ENCODE measurements at regions of chr12 and their contacts with region 1.

Region 1: GRCh38 chr12:94560431-94561221 is 89.7 kb downstream of the TMCC3 start:
- DNase-seq: peak; percentile 93
- H3K4me3 Mint-ChIP-seq: peak overlapping the region; percentile 47
- H3K27ac Mint-ChIP-seq: peak overlapping the region; percentile 90
- H3K4me1 Mint-ChIP-seq: peaks cover 26% of the 10 kb centered on the region
- H3K27me3 Mint-ChIP-seq: no peaks in the 10 kb centered on the region
- CTCF ChIP-seq: no peak

Region 2: GRCh38 chr12:94080348-94081009 is 480.1 kb before region 1 on chr12:
- CTCF ChIA-PET with region 1: no interaction called
- POLR2A ChIA-PET with region 1: no interaction called
- intact Hi-C with region 1: no loop called
- DNase-seq: no peak
- H3K4me3 Mint-ChIP-seq: no peak overlapping the region
- H3K27ac Mint-ChIP-seq: no peak overlapping the region
- H3K4me1 Mint-ChIP-seq: peaks cover 9% of the 10 kb centered on the region
- H3K27me3 Mint-ChIP-seq: no peaks in the 10 kb centered on the region
- CTCF ChIP-seq: no peak

Region 3: DNA sequence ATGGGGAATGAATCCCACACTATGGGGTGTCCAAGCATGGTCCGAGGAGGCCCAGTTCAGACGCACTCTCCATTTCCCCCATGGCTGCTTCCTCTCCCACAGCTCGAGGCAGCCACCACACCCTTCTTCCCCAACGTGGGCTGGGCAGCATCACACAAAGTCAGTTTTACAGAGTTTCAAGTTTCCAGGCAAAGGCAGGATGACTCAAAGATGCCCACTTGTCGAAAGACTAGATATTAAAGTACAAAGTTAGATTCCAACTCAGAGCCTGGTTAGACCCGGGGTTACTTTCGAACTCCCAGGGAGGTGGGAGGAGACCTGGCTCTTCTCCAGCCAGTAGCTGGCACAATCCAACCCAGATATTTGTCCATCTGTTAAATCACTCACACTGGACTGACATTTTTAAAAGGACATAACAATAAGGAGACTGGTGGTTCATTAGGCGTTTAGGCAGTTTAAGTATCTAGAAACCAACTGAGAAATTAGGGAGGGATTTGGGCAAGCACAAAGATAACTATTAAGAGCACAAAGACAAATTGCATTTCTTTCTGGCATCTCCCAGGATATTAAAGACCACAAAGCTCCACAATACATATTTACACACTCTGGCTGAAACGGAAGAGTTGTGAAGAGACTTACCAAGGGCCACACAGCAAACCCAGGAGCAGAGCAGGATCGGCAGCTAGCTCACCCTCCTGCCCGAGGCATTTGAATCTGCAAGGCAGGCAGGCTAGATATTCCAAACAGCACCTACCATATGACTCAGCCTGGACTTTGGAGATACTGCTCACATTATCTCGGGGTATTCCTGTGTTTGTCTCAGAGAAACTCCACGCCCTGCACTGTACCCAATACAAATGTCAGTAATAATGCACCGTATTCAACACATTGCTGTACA is 54.9 kb after region 1 on chr12:
- CTCF ChIA-PET with region 1: interaction called, 4 read pairs
- POLR2A ChIA-PET with region 1: interaction called, 16 read pairs
- intact Hi-C with region 1: no loop called
- DNase-seq: peak; percentile 88
- H3K4me3 Mint-ChIP-seq: no peak overlapping the region
- H3K27ac Mint-ChIP-seq: no peak overlapping the region
- H3K4me1 Mint-ChIP-seq: peaks cover 5% of the 10 kb centered on the region
- H3K27me3 Mint-ChIP-seq: no peaks in the 10 kb centered on the region
- CTCF ChIP-seq: no peak